Naive thymus-derived CD8-positive, alpha-beta T cell (primary cell): ENCODE measurements at regions of chr1 and their contacts with region 1.

Region 1: DNA sequence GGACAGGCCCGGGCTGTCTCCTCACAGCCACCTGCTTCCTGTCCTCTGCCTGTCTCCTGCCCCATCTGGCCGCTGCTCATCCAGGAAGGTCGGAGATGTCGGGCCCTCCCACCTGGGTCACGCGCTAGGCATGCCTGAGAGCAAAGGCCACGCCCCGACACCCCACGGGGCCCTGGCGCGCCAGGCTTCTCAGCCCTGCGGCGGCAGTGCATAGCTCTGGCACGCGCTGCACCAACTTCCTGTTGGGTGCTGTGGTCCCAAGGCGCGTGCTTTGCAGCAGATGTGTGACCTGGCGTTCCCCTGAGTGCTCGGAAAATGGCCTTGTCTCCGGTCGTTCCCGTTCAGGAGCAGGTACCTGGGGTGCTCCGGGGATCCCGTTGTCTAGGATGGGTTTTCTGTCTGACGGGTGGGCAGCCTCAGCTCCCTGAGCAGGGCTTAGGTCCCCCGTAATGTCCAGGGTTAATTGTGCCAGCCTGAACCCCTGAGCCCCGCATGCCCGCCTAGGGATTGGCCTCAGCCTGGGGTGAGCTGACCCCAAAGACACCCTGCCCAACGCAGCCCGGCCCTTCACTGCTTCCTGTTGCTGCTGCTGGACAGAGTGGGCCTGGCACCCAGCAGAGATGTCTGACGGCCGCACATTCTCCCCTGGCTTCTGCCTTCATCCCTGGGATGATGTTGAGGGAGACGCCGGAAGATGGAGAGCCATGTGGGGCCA is 19.4 kb upstream of the KCNAB2 start:
- DNase-seq: peak; percentile 82 to 95 (median 89)
- ATAC-seq: peak; percentile 84 to 90
- H3K4me3 Mint-ChIP-seq: peak overlapping the region; percentile 85 to 99 (median 93)
- H3K27ac Mint-ChIP-seq: peak overlapping the region; percentile 79 to 99 (median 96)
- H3K4me1 Mint-ChIP-seq: peaks cover 40 to 60% (median 56%) of the 10 kb centered on the region in 4 donors
- H3K27me3 Mint-ChIP-seq: no peaks in the 10 kb centered on the region

Region 2: GRCh38 chr1:5992026-5992813 is 34.0 kb before region 1 on chr1 and contains the start of gene NPHP4:
- POLR2A ChIA-PET with region 1: interaction called, 133 read pairs
- DNase-seq: peak; percentile 96 to 100 (median 99)
- ATAC-seq: peak; percentile 89 to 90
- H3K4me3 Mint-ChIP-seq: peak within 1 kb of the TSS; percentile 90 to 99 (median 96)
- H3K27ac Mint-ChIP-seq: peak within 1 kb of the TSS; percentile 91 to 98 (median 96)
- H3K4me1 Mint-ChIP-seq: peaks cover 18 to 47% (median 39%) of the 10 kb centered on the region in 4 donors
- H3K27me3 Mint-ChIP-seq: peaks cover 0 to 2% (median 0%) of the 10 kb centered on the region in 5 donors
- polyA plus RNA-seq, gene NPHP4: 0.14 to 0.97 (median 0.22) TPM

Region 3: GRCh38 chr1:6001992-6002576 is 24.2 kb before region 1 on chr1:
- POLR2A ChIA-PET with region 1: interaction called, 133 read pairs
- DNase-seq: peak in 6 of 10 donors; percentile 22 to 46 (median 32)
- ATAC-seq: peak; percentile 53 to 78
- H3K4me3 Mint-ChIP-seq: peak overlapping the region in 1 of 10 donors; percentile 75
- H3K27ac Mint-ChIP-seq: peak overlapping the region in 6 of 10 donors; percentile 34 to 84 (median 56)
- H3K4me1 Mint-ChIP-seq: peaks cover 27 to 73% (median 52%) of the 10 kb centered on the region in 4 donors
- H3K27me3 Mint-ChIP-seq: no peaks in the 10 kb centered on the region